ENCODE measurements at regions of chr3 and their contacts with region 1.

Region 1: GRCh38 chr3:73624821-73625665 is at the start of gene PDZRN3:
- DNase-seq: no peak
- H3K4me3 ChIP-seq: peak within 1 kb of the TSS; percentile 61 to 98
- H3K27ac ChIP-seq: peak within 1 kb of the TSS; percentile 85
- H3K4me1 ChIP-seq: peaks cover 3% of the 10 kb centered on the region
- H3K27me3 ChIP-seq: no peaks in the 10 kb centered on the region
- CTCF ChIP-seq: no peak
- POLR2A ChIP-seq: peak in 1 of 2 donors; percentile 74
- total RNA-seq, gene PDZRN3: 75.9 TPM

Region 2: DNA sequence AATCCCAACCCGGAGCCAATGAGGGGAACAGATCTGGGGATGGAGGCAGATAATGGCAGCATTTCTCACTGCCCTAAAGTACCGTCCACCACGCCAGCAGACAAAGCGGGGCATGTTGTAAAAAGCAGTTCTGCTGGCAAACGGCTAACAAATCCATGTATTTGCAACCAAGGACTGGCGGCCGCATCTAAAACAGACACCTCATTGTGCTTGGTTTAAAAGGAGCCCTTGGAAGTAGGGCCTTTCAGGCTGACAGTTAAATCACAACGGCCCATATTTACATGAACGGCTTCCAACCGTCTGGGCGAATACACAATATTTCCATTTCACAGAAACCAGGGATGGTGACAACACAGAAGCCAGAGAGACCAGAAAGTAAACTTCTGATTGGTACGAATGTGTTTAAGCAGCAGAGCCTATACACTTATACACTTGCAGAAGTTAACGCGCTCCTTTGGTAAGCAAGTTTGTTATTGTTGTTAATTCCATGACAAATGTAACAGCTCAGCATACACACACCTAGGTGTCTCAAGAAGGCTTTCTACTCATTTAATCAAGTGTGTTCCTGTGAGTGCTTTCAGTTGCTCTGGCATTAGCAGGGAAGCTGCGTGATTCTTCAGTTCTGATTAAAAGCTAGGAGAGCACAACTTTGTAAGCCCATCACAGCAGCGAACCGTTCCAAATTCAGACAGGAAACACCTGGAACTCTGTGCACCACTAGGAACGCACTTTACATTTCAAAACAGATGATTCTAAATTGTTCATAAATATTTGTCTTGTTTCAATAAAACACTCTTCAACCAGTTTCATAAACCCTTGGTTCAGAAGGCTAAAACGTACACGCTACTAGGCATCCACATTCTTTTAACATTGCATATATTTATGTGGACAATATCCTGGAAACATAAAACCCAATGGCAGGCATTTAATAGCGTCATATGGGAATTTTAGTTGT is 113.2 kb before region 1 on chr3:
- intact Hi-C with region 1: loop called (anchors 10 kb)
- DNase-seq: no peak
- H3K4me3 ChIP-seq: no peak overlapping the region
- H3K27ac ChIP-seq: peak overlapping the region; percentile 70
- H3K4me1 ChIP-seq: peaks cover 59% of the 10 kb centered on the region
- H3K27me3 ChIP-seq: no peaks in the 10 kb centered on the region
- CTCF ChIP-seq: no peak
- POLR2A ChIP-seq: no peak

Region 3: DNA sequence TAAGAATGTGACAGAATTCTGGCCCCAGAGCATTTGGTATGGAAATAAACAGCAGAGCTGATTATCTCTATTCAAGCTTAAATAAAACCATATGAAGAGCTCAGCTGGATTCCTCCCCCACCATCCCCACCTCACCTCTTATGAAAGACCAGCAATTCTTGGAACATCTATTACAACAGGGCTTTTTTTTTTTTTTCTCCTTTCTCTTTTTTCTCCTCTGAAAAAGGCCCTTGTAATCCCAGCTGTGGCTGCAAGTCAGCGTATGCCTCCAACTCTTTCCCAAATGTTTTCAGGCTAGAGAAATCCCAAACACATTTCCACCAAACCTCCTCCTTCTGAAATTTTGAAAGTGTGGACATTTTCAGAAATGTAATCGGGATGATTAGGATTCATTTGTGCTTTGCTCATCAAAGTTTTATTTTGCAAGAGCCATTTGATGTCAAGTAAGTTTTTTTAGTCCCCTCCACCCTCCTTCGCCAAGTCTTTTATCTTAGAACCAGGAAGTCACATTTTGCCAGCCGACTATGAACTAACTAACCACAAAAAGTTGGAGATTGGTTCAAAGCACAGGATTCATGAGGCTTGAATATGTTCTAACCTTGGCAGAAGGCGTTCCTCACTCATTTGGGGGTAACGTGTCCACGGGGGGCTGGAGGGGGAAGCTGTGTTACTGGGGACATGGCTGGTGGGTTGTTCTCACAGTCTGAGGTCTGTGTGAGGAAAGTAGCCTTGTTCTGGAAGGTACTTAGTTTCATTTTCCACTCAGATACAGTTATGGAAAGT is 141.7 kb after region 1 on chr3:
- intact Hi-C with region 1: loop called (anchors 2 kb)
- DNase-seq: no peak
- H3K4me3 ChIP-seq: peak overlapping the region; percentile 22 to 33
- H3K27ac ChIP-seq: peak overlapping the region; percentile 77
- H3K4me1 ChIP-seq: peaks cover 15% of the 10 kb centered on the region
- H3K27me3 ChIP-seq: no peaks in the 10 kb centered on the region
- CTCF ChIP-seq: no peak
- POLR2A ChIP-seq: no peak

Region 4: GRCh38 chr3:73805435-73805834 is 180.4 kb after region 1 on chr3:
- intact Hi-C with region 1: loop called (anchors 10 kb)
- DNase-seq: no peak
- H3K4me3 ChIP-seq: no peak overlapping the region
- H3K27ac ChIP-seq: no peak overlapping the region
- H3K4me1 ChIP-seq: peaks cover 5% of the 10 kb centered on the region
- H3K27me3 ChIP-seq: no peaks in the 10 kb centered on the region
- CTCF ChIP-seq: no peak
- POLR2A ChIP-seq: no peak

Region 5: DNA sequence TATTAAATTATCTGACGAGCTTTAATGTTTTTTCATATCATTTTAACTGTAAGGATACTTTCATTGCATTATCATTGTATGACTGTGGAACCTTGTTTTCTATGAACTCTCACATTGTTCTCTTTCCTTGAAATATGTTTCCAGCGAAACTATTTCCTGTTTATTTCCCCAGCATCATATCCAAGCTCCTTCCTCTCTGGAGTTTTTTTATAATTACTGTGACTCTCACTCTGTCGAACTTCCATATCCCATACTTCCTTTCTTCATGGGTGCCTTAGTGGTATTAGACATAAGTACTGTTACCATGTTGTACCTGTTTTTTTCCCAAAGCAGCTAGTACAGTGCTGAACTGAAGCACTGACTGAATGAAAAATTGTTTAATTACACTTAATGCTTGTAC is 1363.1 kb after region 1 on chr3:
- intact Hi-C with region 1: no loop called
- DNase-seq: no peak
- H3K4me3 ChIP-seq: no peak overlapping the region
- H3K27ac ChIP-seq: no peak overlapping the region
- H3K4me1 ChIP-seq: no peaks in the 10 kb centered on the region
- H3K27me3 ChIP-seq: no peaks in the 10 kb centered on the region
- CTCF ChIP-seq: no peak
- POLR2A ChIP-seq: no peak

Measured in vagina (tissue), 2 donors.